ENCODE measurements at regions of chr4 and their contacts with region 1.

Region 1: GRCh38 chr4:173859091-173859713 is 329.2 kb upstream of the HAND2 start:
- DNase-seq: no peak
- ATAC-seq: no peak
- H3K4me3 ChIP-seq: no peak overlapping the region
- H3K27ac ChIP-seq: no peak overlapping the region
- H3K4me1 ChIP-seq: no peaks in the 10 kb centered on the region
- H3K27me3 ChIP-seq: peaks cover 22% of the 10 kb centered on the region
- CTCF ChIP-seq: no peak

Region 2: DNA sequence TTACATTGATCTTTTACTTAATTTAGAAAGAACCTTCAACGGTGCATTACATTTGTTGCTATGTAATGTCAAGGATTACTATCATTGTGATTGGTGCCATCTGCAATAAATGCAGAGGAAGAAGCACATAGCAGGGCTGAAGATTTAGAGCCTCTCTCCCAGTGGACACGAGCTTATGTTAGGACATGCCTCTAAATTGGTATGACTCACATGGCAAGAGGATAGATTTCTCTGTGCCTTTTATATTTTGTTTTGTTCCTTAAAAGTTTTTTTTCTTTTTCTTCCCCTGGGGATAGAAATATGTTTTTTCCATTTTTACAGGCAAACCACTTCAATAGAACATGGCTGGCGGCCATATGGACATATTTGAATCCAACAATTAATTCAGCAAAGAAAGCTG is 124.2 kb before region 1 on chr4:
- CTCF ChIA-PET with region 1: no interaction called
- POLR2A ChIA-PET with region 1: no interaction called
- intact Hi-C with region 1: no loop called
- DNase-seq: no peak
- ATAC-seq: no peak
- H3K4me3 ChIP-seq: no peak overlapping the region
- H3K27ac ChIP-seq: no peak overlapping the region
- H3K4me1 ChIP-seq: no peaks in the 10 kb centered on the region
- H3K27me3 ChIP-seq: peaks cover 8% of the 10 kb centered on the region; the same call in 1 of the 2 replicates
- CTCF ChIP-seq: no peak

Region 3: GRCh38 chr4:174069848-174070330 is 210.7 kb after region 1 on chr4:
- CTCF ChIA-PET with region 1: interaction called, 10 read pairs
- POLR2A ChIA-PET with region 1: no interaction called
- intact Hi-C with region 1: no loop called
- DNase-seq: no peak
- ATAC-seq: no peak
- H3K4me3 ChIP-seq: no peak overlapping the region
- H3K27ac ChIP-seq: no peak overlapping the region
- H3K4me1 ChIP-seq: no peaks in the 10 kb centered on the region
- H3K27me3 ChIP-seq: peaks cover 47% of the 10 kb centered on the region
- CTCF ChIP-seq: no peak